ENCODE measurements at regions of chr3 and their contacts with region 1.

Region 1: GRCh38 chr3:58299839-58300516 is 6.1 kb upstream of the RPP14 start:
- DNase-seq: no peak
- H3K4me3 ChIP-seq: no peak overlapping the region
- H3K27ac ChIP-seq: no peak overlapping the region
- H3K4me1 ChIP-seq: no peaks in the 10 kb centered on the region
- H3K27me3 ChIP-seq: no peaks in the 10 kb centered on the region
- CTCF ChIP-seq: peak; percentile 48

Region 2: GRCh38 chr3:58129041-58129770 is 170.8 kb before region 1 on chr3:
- intact Hi-C with region 1: no loop called
- DNase-seq: no peak
- H3K4me3 ChIP-seq: no peak overlapping the region
- H3K27ac ChIP-seq: no peak overlapping the region
- H3K4me1 ChIP-seq: no peaks in the 10 kb centered on the region
- H3K27me3 ChIP-seq: no peaks in the 10 kb centered on the region
- CTCF ChIP-seq: no peak

Region 3: DNA sequence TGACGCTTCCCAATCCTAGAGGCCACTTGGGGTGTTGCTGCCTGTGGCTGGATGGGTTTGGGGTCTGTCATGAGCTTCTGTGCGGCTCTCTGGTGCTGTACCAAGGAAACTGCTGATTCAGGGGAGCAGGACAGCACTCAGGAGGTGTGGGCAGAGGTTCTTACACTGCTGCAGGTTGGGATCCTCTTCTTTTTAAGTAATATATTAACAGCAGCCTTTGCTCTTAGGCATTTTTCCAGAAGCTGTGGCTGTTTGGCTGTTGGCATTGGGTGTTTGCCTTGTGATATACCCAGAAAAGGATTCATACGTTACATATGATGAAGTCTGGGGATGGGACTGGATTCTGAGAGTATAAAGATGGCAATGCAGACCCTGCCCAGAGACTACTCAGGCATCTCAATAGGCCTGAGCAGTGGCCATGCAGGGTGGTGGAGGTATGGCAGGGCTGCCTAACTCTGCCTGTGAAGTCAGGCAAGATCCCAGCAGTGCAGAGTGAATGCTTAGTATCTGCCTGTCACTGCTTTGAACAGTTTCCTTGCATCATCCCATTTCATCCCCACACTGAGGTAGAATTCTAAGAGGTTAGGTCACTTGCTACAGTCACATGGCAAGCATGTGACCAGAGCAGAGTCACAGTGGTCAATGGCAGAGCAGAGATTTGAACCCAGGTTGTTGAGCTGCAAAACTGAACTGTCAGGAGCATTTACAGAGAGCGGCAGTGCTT is 58.5 kb before region 1 on chr3:
- intact Hi-C with region 1: loop called (anchors 2 kb)
- DNase-seq: peak; percentile 7
- H3K4me3 ChIP-seq: no peak overlapping the region
- H3K27ac ChIP-seq: no peak overlapping the region
- H3K4me1 ChIP-seq: peaks cover 4% of the 10 kb centered on the region
- H3K27me3 ChIP-seq: no peaks in the 10 kb centered on the region
- CTCF ChIP-seq: no peak

Measured in colonic mucosa (tissue), 4 donors.